Psoas muscle (tissue), 8 donors: ENCODE measurements at regions of chr12 and their contacts with region 1.

Region 1: GRCh38 chr12:110100315-110100970 is 23.7 kb upstream of the IFT81 start:
- DNase-seq: peak; percentile 52 to 69
- ATAC-seq: peak; percentile 68 to 83 (median 80)
- H3K4me3 ChIP-seq: no peak overlapping the region
- H3K27ac ChIP-seq: peak overlapping the region; percentile 11
- H3K4me1 ChIP-seq: peaks cover 6% of the 10 kb centered on the region
- H3K27me3 ChIP-seq: no peaks in the 10 kb centered on the region
- CTCF ChIP-seq: peak; percentile 92

Region 2: GRCh38 chr12:110124184-110124995 is 23.9 kb after region 1 on chr12 and contains the start of gene IFT81:
- intact Hi-C with region 1: no loop called
- DNase-seq: peak; percentile 96 to 97
- ATAC-seq: peak; percentile 95 to 99 (median 98)
- H3K4me3 ChIP-seq: peak within 1 kb of the TSS; percentile 100
- H3K27ac ChIP-seq: peak within 1 kb of the TSS; percentile 89
- H3K4me1 ChIP-seq: peaks cover 7% of the 10 kb centered on the region
- H3K27me3 ChIP-seq: no peaks in the 10 kb centered on the region
- CTCF ChIP-seq: no peak
- total RNA-seq, gene IFT81: 4.1 to 9.6 (median 5.3) TPM

Region 3: DNA sequence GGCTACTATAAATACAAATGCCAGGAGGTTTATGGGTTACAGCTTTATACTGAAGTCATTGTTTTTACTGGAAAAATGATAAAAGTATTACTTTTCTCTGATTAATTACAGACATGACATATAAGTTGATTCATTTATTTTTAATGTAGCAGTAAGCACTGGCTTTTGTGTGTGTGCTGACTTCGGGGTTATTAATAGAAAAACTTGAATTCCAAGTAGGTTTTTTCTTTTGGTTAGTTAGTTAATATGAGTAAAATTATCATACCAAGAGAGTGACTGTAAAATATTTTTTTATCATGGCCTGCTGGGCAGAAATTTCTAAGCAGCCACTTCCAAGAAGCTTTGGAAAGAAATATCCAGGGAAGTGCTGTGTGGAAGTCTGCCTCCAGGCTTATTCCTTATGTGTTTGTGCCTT is 80.2 kb after region 1 on chr12:
- intact Hi-C with region 1: loop called in 1 of 2 experiments (anchors 5 kb)
- DNase-seq: no peak
- ATAC-seq: no peak
- H3K4me3 ChIP-seq: no peak overlapping the region
- H3K27ac ChIP-seq: peak overlapping the region; percentile 38
- H3K4me1 ChIP-seq: peaks cover 33% of the 10 kb centered on the region
- H3K27me3 ChIP-seq: no peaks in the 10 kb centered on the region
- CTCF ChIP-seq: no peak

Region 4: GRCh38 chr12:110270125-110270962 is 169.9 kb after region 1 on chr12:
- intact Hi-C with region 1: loop called in 1 of 2 experiments (anchors 10 kb)
- DNase-seq: peak; percentile 58 to 86
- ATAC-seq: peak; percentile 86 to 89 (median 88)
- H3K4me3 ChIP-seq: peak overlapping the region; percentile 5
- H3K27ac ChIP-seq: peak overlapping the region; percentile 58
- H3K4me1 ChIP-seq: peaks cover 46% of the 10 kb centered on the region
- H3K27me3 ChIP-seq: no peaks in the 10 kb centered on the region
- CTCF ChIP-seq: no peak

Region 5: DNA sequence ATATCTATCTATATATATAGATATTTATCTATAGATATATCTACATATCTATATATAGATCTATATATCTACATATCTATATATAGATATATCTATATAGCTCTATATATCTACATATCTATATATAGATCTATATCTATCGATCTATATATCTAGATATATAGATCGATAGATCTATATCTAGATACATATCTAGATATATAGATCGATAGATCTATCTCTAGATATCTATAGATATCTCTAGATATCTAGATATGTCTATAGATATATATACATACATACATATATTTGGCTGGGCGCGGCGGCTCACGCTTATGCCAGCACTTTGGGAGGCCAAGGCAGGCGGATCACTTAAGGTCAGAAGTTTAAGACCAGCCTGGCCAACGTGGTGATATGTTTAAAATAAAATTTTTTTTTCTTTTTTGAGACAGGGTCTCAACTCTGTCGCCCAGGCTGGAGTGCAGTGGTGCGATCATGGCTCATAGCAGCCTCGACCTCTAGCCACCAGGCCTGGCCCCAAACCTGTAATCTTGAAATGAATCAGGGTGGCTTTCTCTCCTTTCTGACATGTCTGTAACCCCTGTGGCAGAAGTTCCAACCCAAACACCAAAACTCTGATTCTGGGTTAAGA is 331.6 kb after region 1 on chr12:
- intact Hi-C with region 1: loop called (anchors 2 to 5 kb)
- DNase-seq: no peak
- ATAC-seq: no peak
- H3K4me3 ChIP-seq: peak overlapping the region; percentile 68
- H3K27ac ChIP-seq: no peak overlapping the region
- H3K4me1 ChIP-seq: no peaks in the 10 kb centered on the region
- H3K27me3 ChIP-seq: no peaks in the 10 kb centered on the region
- CTCF ChIP-seq: no peak